ENCODE measurements at regions of chr19 and their contacts with region 1.

Region 1: DNA sequence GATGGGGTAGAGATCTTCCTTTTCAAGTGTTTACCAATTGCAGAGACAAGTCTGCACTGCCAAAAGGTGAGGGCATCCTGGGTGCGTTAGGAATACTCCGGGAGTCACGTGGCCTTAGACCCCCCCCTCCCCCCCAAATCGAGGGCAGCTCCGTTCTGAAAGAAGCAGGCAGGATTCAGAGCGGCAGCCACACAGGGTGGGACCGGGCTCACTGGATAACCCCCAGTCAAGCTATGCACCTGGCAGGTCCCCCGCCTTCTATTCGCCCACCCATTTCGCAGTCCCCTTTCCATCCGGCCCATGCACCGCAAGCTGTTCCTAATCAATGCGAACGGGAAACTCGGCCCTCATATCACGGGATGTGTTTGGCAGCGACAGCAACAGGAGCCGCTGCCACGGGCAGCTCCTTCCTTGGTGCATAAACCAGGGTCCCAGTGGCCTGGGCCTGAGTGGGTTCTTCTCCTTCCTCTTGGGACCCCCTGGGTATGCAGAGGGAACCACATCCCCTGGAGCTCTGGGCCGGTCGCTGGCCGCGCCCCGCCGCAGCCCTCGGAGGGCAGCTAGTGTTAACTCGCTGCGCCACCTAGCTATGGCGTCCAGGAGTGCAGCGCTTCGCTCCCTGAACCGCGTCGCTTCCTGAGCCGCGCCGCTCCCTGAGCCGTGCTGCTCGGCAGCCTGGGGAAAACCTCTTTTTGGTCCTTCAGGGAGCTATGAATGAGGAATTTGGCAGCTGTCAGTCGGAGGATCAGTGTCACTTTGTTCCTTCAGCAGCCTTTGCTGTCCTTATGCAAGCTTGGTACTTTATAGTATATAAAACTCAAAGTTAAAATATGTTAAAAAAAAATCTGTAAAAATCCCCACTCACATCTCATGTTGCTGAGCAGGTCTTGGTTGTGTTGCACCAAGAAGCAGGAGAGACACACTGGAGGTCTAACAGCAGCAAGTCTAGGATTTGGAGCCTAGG is 41.4 kb downstream of the LYL1 start:
- H3K4me3 ChIP-seq: no peak overlapping the region
- H3K27ac ChIP-seq: no peak overlapping the region
- H3K4me1 ChIP-seq: peaks cover 25% of the 10 kb centered on the region
- CTCF ChIP-seq: peak; percentile 90

Region 2: GRCh38 chr19:12847159-12848139 is 213.8 kb before region 1 on chr19:
- CTCF ChIA-PET with region 1: no interaction called
- POLR2A ChIA-PET with region 1: no interaction called
- H3K4me3 ChIP-seq: peak overlapping the region; percentile 0; the same call in 1 of the 2 replicates
- H3K27ac ChIP-seq: no peak overlapping the region
- H3K4me1 ChIP-seq: no peaks in the 10 kb centered on the region
- CTCF ChIP-seq: peak; percentile 97

Region 3: DNA sequence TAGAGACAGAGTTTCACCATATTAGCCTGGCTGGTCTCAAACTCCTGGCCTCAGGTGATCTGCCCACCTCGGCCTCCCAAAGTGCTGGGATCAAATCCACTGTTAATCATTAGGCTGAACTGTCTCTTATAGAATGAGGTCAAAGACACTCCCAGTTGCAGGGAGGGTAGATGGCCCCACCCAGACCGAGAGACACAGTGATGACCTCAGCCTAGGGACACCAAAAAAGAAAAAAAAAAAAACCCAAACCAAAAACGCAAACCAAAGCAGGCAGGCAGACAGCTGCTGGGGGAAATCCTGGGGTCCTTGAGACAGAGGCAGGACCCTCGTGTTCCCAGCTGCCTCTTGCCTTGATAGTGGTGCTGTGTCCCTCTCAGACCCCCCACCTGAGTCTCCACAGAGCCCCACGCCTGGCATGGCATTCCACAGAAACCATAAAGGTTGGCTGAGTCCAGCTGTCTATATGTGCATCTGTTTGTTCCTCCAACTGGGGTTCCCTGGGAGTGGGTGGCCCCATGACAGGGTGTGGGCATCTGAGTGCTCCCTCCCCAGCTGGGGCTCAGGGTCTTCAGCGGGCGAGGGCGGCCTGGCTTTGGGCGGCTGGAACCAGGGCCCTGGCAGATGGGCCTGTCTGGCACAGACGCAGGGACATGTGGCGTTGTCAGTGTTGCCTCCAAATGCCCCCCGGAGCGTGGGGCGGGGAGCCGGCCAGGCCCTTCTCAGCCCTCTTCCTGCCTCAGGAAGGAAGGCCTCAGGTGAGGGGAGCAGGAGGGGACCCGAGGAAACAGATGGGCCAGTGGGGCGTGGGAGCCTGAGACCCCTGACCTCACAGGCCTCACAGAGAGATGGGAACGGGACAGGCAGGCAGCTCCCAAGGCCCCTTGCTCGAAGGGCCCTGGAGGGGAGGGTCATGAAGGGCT is 86.7 kb before region 1 on chr19:
- CTCF ChIA-PET with region 1: interaction called, 140 read pairs
- POLR2A ChIA-PET with region 1: interaction called, 3 read pairs
- H3K4me3 ChIP-seq: no peak overlapping the region
- H3K27ac ChIP-seq: no peak overlapping the region
- H3K4me1 ChIP-seq: no peaks in the 10 kb centered on the region
- CTCF ChIP-seq: no peak

Region 4: GRCh38 chr19:12995596-12996405 is 65.4 kb before region 1 on chr19:
- CTCF ChIA-PET with region 1: interaction called, 11 read pairs
- POLR2A ChIA-PET with region 1: no interaction called
- H3K4me3 ChIP-seq: peak overlapping the region; percentile 51
- H3K27ac ChIP-seq: peak overlapping the region; percentile 70; the same call in 1 of the 2 replicates
- H3K4me1 ChIP-seq: no peaks in the 10 kb centered on the region
- CTCF ChIP-seq: no peak

Region 5: GRCh38 chr19:13022859-13023636 is 38.2 kb before region 1 on chr19:
- CTCF ChIA-PET with region 1: interaction called, 247 read pairs
- POLR2A ChIA-PET with region 1: no interaction called
- H3K4me3 ChIP-seq: no peak overlapping the region
- H3K27ac ChIP-seq: peak overlapping the region; percentile 44; the same call in 1 of the 2 replicates
- H3K4me1 ChIP-seq: peaks cover 14% of the 10 kb centered on the region
- CTCF ChIP-seq: no peak

Region 6: GRCh38 chr19:13044231-13044836 is 16.9 kb before region 1 on chr19:
- CTCF ChIA-PET with region 1: interaction called, 51 read pairs
- POLR2A ChIA-PET with region 1: interaction called, 3 read pairs
- H3K4me3 ChIP-seq: no peak overlapping the region
- H3K27ac ChIP-seq: no peak overlapping the region
- H3K4me1 ChIP-seq: no peaks in the 10 kb centered on the region
- CTCF ChIP-seq: no peak

Region 7: GRCh38 chr19:13093407-13094105 is 32.3 kb after region 1 on chr19:
- CTCF ChIA-PET with region 1: interaction called, 109 read pairs
- POLR2A ChIA-PET with region 1: interaction called, 3 read pairs
- H3K4me3 ChIP-seq: no peak overlapping the region
- H3K27ac ChIP-seq: no peak overlapping the region
- H3K4me1 ChIP-seq: no peaks in the 10 kb centered on the region
- CTCF ChIP-seq: peak; percentile 95

Measured in HEK293 (cell line).